SK-N-SH (cell line): ENCODE measurements at regions of chr10 and their contacts with region 1.

Region 1: DNA sequence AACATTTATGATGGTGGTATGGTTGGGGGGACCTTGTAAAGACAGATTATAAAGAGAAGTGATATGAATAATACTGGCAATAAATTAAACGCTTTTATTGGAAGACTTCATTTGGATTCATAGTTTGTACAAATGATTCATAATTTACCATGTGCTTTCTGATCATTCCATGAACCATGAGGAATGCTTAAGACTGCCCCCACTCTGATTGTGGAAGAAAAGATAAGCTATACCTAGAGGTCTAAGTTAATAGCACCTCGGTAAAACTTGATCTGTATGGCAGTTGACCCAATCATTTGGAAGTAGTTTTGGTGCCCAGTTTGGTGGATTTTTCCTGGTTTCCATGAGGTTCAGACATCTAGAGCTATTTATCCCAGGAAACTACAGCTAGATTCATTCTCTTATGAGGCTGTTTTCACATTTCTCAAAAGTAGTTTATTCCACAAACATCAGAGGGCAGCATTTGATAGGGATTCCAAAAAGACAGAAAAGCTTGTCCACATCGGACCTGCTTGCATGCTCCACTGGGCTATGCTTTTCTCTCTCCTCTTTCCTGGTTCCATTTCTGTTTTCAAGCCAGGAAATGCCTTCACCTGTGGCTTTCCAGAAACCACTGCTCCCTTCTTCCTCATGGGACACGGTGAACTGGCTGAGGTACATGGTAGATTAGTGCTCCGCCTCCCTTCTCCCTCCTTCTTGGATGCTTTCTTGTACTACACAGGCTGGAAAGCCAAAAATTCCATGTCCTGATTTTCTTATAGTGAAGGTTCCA is 29.2 kb downstream of the TFAM start:
- DNase-seq: peak; percentile 54
- H3K4me3 ChIP-seq: no peak overlapping the region
- H3K27ac ChIP-seq: no peak overlapping the region
- H3K4me1 ChIP-seq: no peaks in the 10 kb centered on the region
- H3K27me3 ChIP-seq: no peaks in the 10 kb centered on the region
- CTCF ChIP-seq: peak; percentile 70
- EP300 ChIP-seq: no peak
- RAD21 ChIP-seq: peak; percentile 94

Region 2: DNA sequence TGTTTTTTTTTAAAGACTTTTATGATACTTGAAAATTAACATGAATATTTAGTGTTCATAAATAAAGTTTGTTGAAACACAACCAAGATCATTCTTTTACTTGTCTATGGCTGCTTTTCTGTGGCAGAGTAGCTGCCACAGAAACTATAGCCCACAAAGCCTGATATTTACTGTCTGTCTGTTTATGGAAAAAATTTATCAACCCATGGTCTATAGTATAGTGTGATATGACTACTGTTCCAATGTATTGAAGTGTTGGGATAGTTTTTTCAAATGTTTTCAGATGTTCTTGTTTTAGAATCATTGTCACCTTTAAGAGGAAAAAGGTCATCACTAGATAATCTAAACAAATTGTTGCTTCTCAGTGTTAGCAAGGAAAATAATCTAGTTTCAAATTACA is 18.4 kb before region 1 on chr10:
- CTCF ChIA-PET with region 1: interaction called, 10 read pairs
- POLR2A ChIA-PET with region 1: no interaction called
- DNase-seq: no peak
- H3K4me3 ChIP-seq: no peak overlapping the region
- H3K27ac ChIP-seq: no peak overlapping the region
- H3K4me1 ChIP-seq: no peaks in the 10 kb centered on the region
- H3K27me3 ChIP-seq: no peaks in the 10 kb centered on the region
- CTCF ChIP-seq: no peak
- EP300 ChIP-seq: no peak
- RAD21 ChIP-seq: no peak

Region 3: GRCh38 chr10:58531084-58531695 is 116.7 kb after region 1 on chr10:
- CTCF ChIA-PET with region 1: interaction called, 13 read pairs
- POLR2A ChIA-PET with region 1: no interaction called
- DNase-seq: no peak
- H3K4me3 ChIP-seq: no peak overlapping the region; a peak in 1 of 4 replicates
- H3K27ac ChIP-seq: no peak overlapping the region
- H3K4me1 ChIP-seq: peaks cover 0 to 16% of the 10 kb centered on the region in 2 experiments; a peak in 2 of 4 replicates
- H3K27me3 ChIP-seq: no peaks in the 10 kb centered on the region
- CTCF ChIP-seq: peak; percentile 83
- EP300 ChIP-seq: no peak
- RAD21 ChIP-seq: peak; percentile 88

Region 4: GRCh38 chr10:58641095-58641531 is 226.7 kb after region 1 on chr10:
- CTCF ChIA-PET with region 1: interaction called, 22 read pairs
- POLR2A ChIA-PET with region 1: no interaction called
- DNase-seq: peak; percentile 20
- H3K4me3 ChIP-seq: peak overlapping the region in 1 of 2 experiments; percentile 29; a peak in 1 of 4 replicates
- H3K27ac ChIP-seq: peak overlapping the region; percentile 86 to 88
- H3K4me1 ChIP-seq: peaks cover 17 to 38% of the 10 kb centered on the region in 2 experiments; a peak in 3 of 4 replicates
- H3K27me3 ChIP-seq: no peaks in the 10 kb centered on the region
- CTCF ChIP-seq: peak; percentile 61
- EP300 ChIP-seq: peak; percentile 61 to 87
- RAD21 ChIP-seq: peak; percentile 73

Region 5: DNA sequence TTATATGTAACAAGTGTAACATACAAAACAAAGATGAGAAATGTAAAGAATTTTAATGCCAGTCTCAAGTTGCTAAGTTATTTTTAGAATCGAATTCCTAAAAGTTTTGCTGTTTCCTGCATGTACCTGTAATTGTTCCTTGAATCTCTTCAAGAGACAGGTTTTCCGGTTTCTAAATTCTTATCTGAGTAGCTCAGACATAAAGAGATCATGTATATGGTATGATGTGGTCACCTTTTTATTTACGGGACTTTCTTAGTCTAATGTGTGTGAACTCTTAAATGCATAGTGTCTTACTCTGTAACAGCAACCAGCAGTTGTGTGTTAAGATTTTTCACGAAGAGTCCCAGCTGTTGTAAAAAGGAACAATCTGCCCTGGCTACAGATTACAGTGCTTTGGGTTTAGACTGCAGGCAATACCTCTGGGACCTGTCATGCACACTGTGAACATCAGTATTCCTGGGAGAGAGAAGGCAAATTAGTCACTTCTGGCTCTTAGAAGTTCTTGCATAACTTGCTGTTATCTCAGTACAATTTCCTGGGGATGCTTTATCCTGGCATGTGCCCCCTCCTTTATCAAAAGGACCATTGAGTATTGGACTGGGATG is 361.6 kb after region 1 on chr10:
- CTCF ChIA-PET with region 1: interaction called, 10 read pairs
- POLR2A ChIA-PET with region 1: no interaction called
- DNase-seq: no peak
- H3K4me3 ChIP-seq: no peak overlapping the region
- H3K27ac ChIP-seq: peak overlapping the region; percentile 33 to 92; a peak in 3 of 4 replicates
- H3K4me1 ChIP-seq: peaks cover 15 to 23% of the 10 kb centered on the region in 2 experiments
- H3K27me3 ChIP-seq: no peaks in the 10 kb centered on the region
- CTCF ChIP-seq: no peak
- EP300 ChIP-seq: no peak
- RAD21 ChIP-seq: no peak